ENCODE measurements at regions of chr1 and their contacts with region 1.

Region 1: DNA sequence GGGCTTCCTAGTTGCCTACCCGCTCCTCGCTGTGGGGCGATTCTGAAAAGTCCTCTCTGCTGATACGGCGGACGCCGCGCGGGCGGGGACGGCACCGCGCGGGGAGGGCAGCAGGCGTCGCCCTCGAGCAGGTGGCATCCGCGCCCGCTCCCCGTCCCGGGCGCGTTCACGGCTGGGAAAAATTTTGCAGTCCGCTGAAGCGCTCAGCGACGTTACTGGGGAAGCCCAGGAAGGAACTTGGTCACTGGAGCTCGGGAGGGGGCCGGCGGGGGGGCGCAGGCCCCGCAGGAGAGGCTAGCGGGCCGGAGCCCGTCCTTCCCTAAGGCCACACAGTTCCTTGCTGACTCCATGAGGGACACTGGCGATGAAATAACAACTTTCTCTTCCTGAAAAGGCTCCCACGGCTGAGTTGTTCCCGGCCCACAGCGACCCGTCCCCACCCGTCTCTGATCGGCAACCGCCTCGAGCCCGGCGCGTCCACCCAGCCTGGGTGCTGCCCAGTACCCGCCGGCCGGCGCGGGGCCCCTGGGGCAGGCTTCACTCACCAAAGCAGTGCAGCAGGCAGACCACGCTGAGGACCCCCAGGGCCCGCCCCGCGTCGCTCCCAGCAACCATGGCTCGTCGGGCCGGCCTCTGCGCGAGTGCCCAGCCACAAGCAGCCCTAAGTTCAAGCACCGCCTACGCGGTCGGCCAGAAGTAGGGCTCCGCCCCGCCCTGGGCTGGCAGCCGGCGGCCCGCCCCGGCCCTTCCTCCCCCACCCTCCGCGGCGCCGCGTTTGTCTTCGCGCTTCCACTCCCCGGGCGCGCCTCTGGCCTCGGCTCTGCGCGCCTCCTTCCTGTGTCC is at the start of gene CD58:
- DNase-seq: peak; percentile 95
- H3K4me3 Mint-ChIP-seq: peak within 1 kb of the TSS; percentile 95
- H3K27ac Mint-ChIP-seq: peak within 1 kb of the TSS; percentile 88
- H3K4me1 Mint-ChIP-seq: peaks cover 60% of the 10 kb centered on the region
- H3K27me3 Mint-ChIP-seq: no peaks in the 10 kb centered on the region
- total RNA-seq, gene CD58: 26.5 and 31.0 TPM in 2 replicates

Region 2: GRCh38 chr1:116418091-116418830 is 152.3 kb before region 1 on chr1:
- intact Hi-C with region 1: loop called (anchors 5 kb)
- DNase-seq: peak; percentile 96
- H3K4me3 Mint-ChIP-seq: peak overlapping the region; percentile 89
- H3K27ac Mint-ChIP-seq: peak overlapping the region; percentile 88
- H3K4me1 Mint-ChIP-seq: peaks cover 47% of the 10 kb centered on the region
- H3K27me3 Mint-ChIP-seq: peaks cover 9% of the 10 kb centered on the region

Region 3: DNA sequence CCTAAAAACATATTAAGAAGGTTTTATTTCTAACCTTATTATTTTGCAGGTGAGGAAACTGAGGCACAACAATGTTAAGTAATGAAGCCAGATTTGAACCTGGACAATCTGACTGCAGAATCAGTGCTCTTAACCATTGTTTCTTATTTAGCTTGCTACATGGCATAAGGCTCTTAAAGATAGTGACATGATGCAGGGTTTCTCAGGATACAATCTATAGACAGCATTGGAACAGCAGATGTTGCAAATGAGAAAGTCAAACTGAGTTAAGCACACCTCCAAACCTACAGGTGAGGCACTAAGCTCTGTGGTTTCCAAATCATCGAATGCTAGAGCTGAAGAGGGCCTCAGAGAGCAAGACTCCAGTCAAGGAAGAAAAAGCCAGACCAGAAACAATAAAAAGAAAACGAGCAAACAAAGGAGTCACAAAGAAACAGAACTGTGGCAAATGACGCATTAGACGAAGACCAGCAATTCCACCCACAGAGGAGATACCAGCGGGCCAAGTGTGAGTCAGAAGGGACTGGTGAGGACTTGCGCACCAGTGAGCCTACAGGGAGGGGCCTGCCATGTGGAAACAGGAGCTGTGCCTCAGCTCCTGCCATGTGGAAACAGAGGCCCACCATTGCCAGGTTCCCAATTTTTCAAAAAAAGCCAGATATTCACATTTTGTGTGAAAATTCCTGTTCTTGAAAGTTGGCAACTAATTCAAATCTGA is 14.1 kb before region 1 on chr1:
- intact Hi-C with region 1: loop called (anchors 1 kb)
- DNase-seq: peak; percentile 88
- H3K4me3 Mint-ChIP-seq: peak overlapping the region; percentile 19
- H3K27ac Mint-ChIP-seq: peak overlapping the region; percentile 86
- H3K4me1 Mint-ChIP-seq: peaks cover 69% of the 10 kb centered on the region
- H3K27me3 Mint-ChIP-seq: no peaks in the 10 kb centered on the region

Region 4: DNA sequence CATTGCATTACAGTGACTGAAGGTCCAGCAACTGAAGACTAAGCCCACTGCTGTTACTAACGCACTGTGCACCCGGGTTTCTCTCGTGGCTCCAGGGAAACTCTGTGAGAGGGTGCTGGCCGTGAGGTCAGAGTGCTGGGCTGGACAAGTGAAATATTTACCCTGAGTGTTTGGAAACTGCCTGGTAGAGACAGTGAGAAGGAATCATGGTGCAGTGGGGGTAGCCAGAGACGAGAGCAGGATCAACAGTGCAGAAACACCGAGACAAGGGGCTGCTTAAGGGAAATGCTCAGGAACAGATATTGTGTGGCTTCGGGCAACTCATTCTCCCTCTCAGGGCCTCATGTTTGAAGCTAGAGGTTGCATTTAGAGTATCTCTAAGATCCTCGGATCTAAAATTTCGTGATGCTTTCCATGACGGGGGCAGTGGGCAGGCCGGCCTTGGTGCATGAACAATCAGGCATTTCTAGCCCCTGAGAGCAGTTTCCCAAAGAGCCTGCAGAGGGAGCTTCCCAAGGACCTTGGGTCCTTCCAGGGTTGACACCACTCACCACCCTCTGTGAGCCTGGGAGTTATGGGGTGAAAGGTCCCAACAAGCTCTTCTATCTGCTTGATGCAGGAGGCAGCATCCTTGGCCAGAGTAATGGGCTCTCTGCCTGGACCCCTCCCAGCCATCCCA is 193.3 kb after region 1 on chr1:
- intact Hi-C with region 1: loop called (anchors 5 kb)
- DNase-seq: peak; percentile 86
- H3K4me3 Mint-ChIP-seq: peak overlapping the region; percentile 98
- H3K27ac Mint-ChIP-seq: peak overlapping the region; percentile 99
- H3K4me1 Mint-ChIP-seq: peaks cover 85% of the 10 kb centered on the region
- H3K27me3 Mint-ChIP-seq: no peaks in the 10 kb centered on the region

Region 5: GRCh38 chr1:117001254-117001927 is 430.8 kb after region 1 on chr1 and contains the start of gene CD101:
- intact Hi-C with region 1: loop called (anchors 5 kb)
- DNase-seq: peak; percentile 70
- H3K4me3 Mint-ChIP-seq: peak within 1 kb of the TSS; percentile 11
- H3K27ac Mint-ChIP-seq: peak within 1 kb of the TSS; percentile 66
- H3K4me1 Mint-ChIP-seq: peaks cover 29% of the 10 kb centered on the region
- H3K27me3 Mint-ChIP-seq: peaks cover under 1% of the 10 kb centered on the region
- total RNA-seq, gene CD101: 0.82 and 1.2 TPM in 2 replicates

Measured in activated CD4-positive, alpha-beta T cell treated with anti-CD3 and anti-CD28 coated beads, Interleukin-2, amount 10 ng/mL, durations not matched to agents 24 days and 14 days (primary cell).